ENCODE measurements at regions of chr15 and their contacts with region 1.

Region 1: GRCh38 chr15:38699633-38700230 is 135.1 kb upstream of the RASGRP1 start:
- DNase-seq: no peak
- H3K4me3 ChIP-seq: no peak overlapping the region
- H3K27ac ChIP-seq: no peak overlapping the region
- H3K27me3 ChIP-seq: peaks cover 2% of the 10 kb centered on the region
- CTCF ChIP-seq: peak; percentile 90

Region 2: GRCh38 chr15:38453971-38454695 is 245.6 kb before region 1 on chr15 and contains the start of gene FAM98B:
- CTCF ChIA-PET with region 1: interaction called, 14 read pairs
- POLR2A ChIA-PET with region 1: no interaction called
- DNase-seq: peak; percentile 69
- H3K4me3 ChIP-seq: peak within 1 kb of the TSS; percentile 92
- H3K27ac ChIP-seq: peak within 1 kb of the TSS; percentile 85
- H3K27me3 ChIP-seq: no peaks in the 10 kb centered on the region
- CTCF ChIP-seq: no peak; the same call in none of the 2 replicates
- polyA plus RNA-seq, gene FAM98B: 11.4 and 19.6 TPM in 2 replicates

Region 3: GRCh38 chr15:38474155-38474757 is 225.5 kb before region 1 on chr15:
- CTCF ChIA-PET with region 1: interaction called, 23 read pairs
- POLR2A ChIA-PET with region 1: no interaction called
- DNase-seq: no peak
- H3K4me3 ChIP-seq: no peak overlapping the region
- H3K27ac ChIP-seq: no peak overlapping the region
- H3K27me3 ChIP-seq: no peaks in the 10 kb centered on the region
- CTCF ChIP-seq: peak; percentile 84

Region 4: DNA sequence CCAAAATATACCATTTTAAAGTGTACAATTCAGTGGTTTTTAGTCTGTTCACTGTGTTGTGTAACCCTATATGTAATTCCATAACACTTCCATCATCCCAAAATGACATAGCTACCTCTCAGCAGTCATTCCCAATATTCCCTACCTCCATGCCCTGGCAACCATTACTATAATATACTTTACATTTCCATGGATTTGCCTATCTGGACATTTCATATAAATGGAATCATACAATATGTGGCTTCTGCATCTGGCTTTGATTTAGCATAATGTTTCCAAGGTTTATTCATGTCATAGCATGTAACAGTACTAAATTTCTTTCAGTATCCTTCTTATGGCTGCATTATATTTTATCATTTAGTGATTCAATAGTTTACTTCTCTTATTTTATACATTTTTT is 220.5 kb before region 1 on chr15:
- CTCF ChIA-PET with region 1: interaction called, 17 read pairs
- POLR2A ChIA-PET with region 1: no interaction called
- DNase-seq: no peak
- H3K4me3 ChIP-seq: no peak overlapping the region
- H3K27ac ChIP-seq: no peak overlapping the region
- H3K27me3 ChIP-seq: no peaks in the 10 kb centered on the region
- CTCF ChIP-seq: no peak

Region 5: DNA sequence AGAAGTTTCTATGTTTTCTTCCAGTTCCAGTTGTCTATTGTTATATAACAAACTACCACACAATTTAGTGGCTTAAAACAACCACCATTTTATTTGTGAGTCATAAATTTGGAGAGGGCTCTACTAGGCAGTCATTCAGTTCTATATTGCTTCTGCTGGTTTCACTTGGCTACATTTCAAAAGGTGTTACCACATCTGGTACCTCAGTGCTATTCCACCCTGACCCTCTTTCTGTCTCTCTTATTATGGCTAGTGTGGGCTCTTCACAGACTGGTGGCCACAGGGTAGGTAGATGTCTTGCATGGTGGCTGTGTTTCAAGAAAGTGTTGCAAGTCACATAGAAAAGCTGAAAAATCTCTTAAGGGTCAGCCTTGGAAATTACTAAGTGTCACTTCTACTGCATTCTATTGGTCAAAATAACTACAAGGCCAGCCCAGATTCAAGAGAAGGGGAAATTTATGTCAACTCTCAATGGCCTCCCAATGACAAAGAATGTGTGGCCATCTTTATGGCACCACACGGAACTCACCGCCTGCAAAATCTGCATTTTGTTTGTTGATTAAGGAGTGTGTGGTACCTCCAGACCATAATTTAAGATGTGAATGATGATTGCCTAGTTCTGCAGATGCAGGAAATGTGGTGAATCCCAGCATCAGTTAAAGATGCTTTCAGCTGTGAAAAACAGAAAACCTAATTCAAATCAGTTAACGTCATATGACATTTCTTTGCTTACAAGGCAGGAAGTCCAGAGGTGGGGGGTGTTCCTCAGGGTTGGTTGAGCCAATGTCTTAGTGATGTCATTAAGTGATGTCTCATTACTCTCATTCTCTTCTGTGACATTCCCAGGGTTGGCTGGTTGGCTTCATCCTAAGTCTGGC is 29.4 kb before region 1 on chr15:
- CTCF ChIA-PET with region 1: no interaction called
- POLR2A ChIA-PET with region 1: no interaction called
- DNase-seq: no peak
- H3K4me3 ChIP-seq: no peak overlapping the region
- H3K27ac ChIP-seq: no peak overlapping the region
- H3K27me3 ChIP-seq: peaks cover 43% of the 10 kb centered on the region
- CTCF ChIP-seq: no peak

Measured in AG04450 (cell line).